ENCODE measurements at regions of chr6 and their contacts with region 1.

Region 1: GRCh38 chr6:116876635-116877611 is at the start of gene RFX6:
- DNase-seq: no peak
- ATAC-seq: peak; percentile 95
- H3K4me3 ChIP-seq: peak within 1 kb of the TSS; percentile 40 to 68 (median 52); a peak in 4 of 6 replicates
- H3K27ac ChIP-seq: no peak within 1 kb of the TSS
- H3K4me1 ChIP-seq: peaks cover 13% of the 10 kb centered on the region
- H3K27me3 ChIP-seq: peaks cover 15 to 32% of the 10 kb centered on the region in 2 experiments
- CTCF ChIP-seq: no peak
- EP300 ChIP-seq: no peak
- POLR2A ChIP-seq: no peak
- RAD21 ChIP-seq: no peak
- total RNA-seq, gene RFX6: not detected in 2 replicates

Region 2: DNA sequence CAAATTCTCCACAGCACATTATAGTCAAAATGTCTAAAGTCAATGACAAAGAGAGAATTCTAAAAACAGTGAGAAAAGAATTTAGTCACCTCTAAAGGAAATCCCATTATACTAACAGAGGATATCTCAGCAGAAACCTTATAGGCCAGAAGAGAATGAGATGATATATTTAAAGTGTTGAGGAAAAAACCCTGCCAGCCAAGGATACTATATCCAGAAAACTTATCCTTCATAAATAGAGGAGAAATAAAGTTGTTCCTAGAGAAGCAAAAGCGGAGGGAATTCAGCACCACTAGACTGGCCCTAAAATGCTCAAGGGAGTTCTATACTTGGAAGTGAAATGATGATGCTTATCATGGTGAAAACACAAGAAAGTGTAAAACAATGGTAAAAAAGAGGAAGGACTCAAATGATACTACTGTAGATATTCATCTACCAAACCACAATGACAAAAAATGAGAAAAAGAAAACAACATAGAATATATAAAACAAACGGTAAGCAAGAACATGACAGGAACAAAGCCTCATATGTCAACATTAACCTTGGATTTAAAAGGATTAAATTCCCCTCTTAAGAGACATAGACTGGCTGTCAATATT is 64.8 kb before region 1 on chr6:
- CTCF ChIA-PET with region 1: no interaction called
- POLR2A ChIA-PET with region 1: no interaction called
- in situ Hi-C with region 1: no loop called
- intact Hi-C with region 1: no loop called
- DNase-seq: no peak
- ATAC-seq: no peak
- H3K4me3 ChIP-seq: no peak overlapping the region
- H3K27ac ChIP-seq: no peak overlapping the region
- H3K4me1 ChIP-seq: no peaks in the 10 kb centered on the region
- H3K27me3 ChIP-seq: no peaks in the 10 kb centered on the region
- CTCF ChIP-seq: no peak
- EP300 ChIP-seq: no peak
- POLR2A ChIP-seq: no peak
- RAD21 ChIP-seq: no peak

Region 3: DNA sequence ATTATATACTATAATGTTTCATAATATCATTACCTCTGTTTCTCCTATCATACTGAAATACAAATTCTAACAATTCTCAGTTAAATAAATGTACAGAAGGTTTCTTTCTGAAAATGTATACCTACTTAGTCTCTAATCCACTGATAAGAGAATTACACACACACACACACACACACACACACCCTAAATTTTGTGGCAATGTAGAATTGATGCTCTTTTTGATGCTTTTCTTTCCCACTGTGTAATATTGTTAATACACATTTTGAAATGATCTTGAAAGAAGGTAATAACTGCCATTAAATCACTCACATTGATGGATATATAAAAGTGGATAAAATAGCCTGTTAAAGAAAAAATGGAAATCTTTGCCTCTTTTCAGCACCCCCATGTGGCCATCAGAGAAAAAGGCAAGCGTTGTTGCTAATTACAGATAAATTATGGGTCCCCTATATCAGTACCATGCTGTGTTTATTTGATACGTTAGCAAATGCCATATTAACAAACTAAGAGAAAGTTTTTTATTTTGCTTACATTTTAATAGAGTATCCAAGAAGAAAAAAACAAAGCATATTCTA is 311.8 kb after region 1 on chr6:
- CTCF ChIA-PET with region 1: no interaction called
- POLR2A ChIA-PET with region 1: no interaction called
- in situ Hi-C with region 1: loop called (anchors 10 kb)
- intact Hi-C with region 1: loop called (anchors 1 kb)
- DNase-seq: no peak
- ATAC-seq: no peak
- H3K4me3 ChIP-seq: no peak overlapping the region
- H3K27ac ChIP-seq: no peak overlapping the region
- H3K4me1 ChIP-seq: no peaks in the 10 kb centered on the region
- H3K27me3 ChIP-seq: no peaks in the 10 kb centered on the region
- CTCF ChIP-seq: peak; percentile 38; the same call in 1 of the 2 replicates
- EP300 ChIP-seq: no peak
- POLR2A ChIP-seq: no peak
- RAD21 ChIP-seq: no peak

Region 4: GRCh38 chr6:117194978-117195377 is 318.1 kb after region 1 on chr6:
- CTCF ChIA-PET with region 1: no interaction called
- POLR2A ChIA-PET with region 1: no interaction called
- in situ Hi-C with region 1: loop called (anchors 10 kb)
- intact Hi-C with region 1: no loop called
- DNase-seq: no peak
- ATAC-seq: peak; percentile 50; the same call in 2 of the 3 replicates
- H3K4me3 ChIP-seq: no peak overlapping the region
- H3K27ac ChIP-seq: no peak overlapping the region
- H3K4me1 ChIP-seq: no peaks in the 10 kb centered on the region
- H3K27me3 ChIP-seq: no peaks in the 10 kb centered on the region
- CTCF ChIP-seq: no peak
- EP300 ChIP-seq: no peak
- POLR2A ChIP-seq: no peak
- RAD21 ChIP-seq: no peak

Region 5: DNA sequence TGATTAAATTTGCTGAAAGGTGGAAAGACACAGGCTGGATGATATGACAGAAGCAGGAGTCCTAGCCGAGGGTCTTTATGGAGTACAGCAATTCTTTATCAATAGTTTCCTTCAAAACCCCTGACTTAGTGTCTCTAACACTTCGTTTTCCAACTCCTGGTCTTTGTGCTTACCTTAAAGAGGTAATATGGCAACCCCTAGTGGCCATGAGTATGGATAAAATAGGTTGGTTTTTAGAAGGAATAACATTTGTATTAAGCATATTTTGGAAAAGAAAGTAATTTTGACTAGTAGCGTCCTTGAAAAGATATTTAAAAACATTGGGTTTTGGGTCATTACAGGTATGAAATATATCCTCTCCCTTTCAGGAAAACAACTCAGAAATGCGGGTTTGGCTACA is 440.3 kb after region 1 on chr6:
- CTCF ChIA-PET with region 1: no interaction called
- POLR2A ChIA-PET with region 1: no interaction called
- in situ Hi-C with region 1: no loop called
- intact Hi-C with region 1: loop called (anchors 10 kb)
- DNase-seq: peak; percentile 39
- ATAC-seq: peak; percentile 78
- H3K4me3 ChIP-seq: no peak overlapping the region
- H3K27ac ChIP-seq: no peak overlapping the region
- H3K4me1 ChIP-seq: no peaks in the 10 kb centered on the region
- H3K27me3 ChIP-seq: peaks cover 0 to 6% of the 10 kb centered on the region in 2 experiments; a peak in 1 of 5 replicates
- CTCF ChIP-seq: peak; percentile 59
- EP300 ChIP-seq: no peak
- POLR2A ChIP-seq: no peak
- RAD21 ChIP-seq: peak; percentile 15; the same call in 1 of the 2 replicates

Measured in HepG2 (cell line).